Calu3 (cell line): ENCODE measurements at regions of chr13 and their contacts with region 1.

Region 1: DNA sequence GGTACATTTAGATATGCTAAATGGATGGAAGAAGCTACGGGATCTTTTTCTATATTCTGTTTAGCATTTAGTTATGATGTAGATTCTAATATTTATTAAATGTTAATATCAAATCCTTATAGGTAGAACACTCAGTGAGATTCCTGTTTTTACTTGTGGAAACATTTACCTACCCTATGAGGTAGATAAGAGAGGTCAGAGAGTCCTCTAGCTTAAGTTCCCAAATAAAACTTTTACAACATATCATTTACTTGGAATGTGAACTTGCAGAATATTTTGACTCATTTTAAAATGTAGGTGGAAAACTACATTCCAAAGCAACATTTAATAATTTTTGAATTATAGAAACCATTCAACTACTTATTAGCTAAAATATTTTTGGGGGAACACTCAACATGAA is 63.7 kb downstream of the UBL3 start:
- DNase-seq: no peak
- H3K4me3 Mint-ChIP-seq: no peak overlapping the region
- H3K27ac Mint-ChIP-seq: no peak overlapping the region
- H3K4me1 Mint-ChIP-seq: peaks cover 26% of the 10 kb centered on the region
- H3K27me3 Mint-ChIP-seq: no peaks in the 10 kb centered on the region
- CTCF ChIP-seq: no peak

Region 2: DNA sequence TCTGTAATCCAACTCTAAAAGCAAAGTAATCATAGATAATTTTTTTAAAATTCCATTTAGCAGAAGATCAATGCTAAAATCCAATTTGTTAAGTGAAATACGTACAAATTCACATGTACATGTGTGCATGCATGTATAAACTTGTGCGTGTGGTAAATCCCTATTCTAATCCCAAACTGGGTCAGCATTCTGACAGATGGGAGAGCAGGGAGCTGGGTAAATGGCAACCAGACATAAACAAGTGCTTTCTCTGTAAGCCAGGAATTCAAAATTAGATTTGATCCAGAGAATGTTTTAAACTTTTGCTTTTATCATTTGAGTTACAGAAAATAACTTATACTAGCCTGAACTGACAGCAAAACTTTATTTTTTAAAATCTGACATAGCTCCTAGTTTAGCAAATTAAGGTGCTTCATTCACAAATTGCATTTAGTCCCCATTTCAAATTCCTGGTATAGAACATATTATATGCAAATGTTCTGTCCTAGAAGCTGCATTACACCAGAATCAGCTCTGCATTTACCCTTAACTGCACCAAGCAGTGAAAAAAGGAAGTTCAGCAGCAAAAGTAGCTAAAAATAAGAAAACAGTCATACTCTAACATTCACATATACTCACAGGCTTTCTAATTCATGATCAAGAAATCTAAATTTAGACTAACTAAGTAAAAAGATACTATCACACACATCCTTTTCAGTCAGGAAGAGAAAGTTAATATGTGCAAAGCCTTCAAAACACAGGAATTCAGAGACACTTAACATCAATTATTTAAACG is 31.1 kb after region 1 on chr13:
- CTCF ChIA-PET with region 1: no interaction called
- intact Hi-C with region 1: loop called (anchors 5 kb)
- DNase-seq: no peak
- H3K4me3 Mint-ChIP-seq: no peak overlapping the region
- H3K27ac Mint-ChIP-seq: no peak overlapping the region
- H3K4me1 Mint-ChIP-seq: no peaks in the 10 kb centered on the region
- H3K27me3 Mint-ChIP-seq: no peaks in the 10 kb centered on the region
- CTCF ChIP-seq: no peak

Region 3: DNA sequence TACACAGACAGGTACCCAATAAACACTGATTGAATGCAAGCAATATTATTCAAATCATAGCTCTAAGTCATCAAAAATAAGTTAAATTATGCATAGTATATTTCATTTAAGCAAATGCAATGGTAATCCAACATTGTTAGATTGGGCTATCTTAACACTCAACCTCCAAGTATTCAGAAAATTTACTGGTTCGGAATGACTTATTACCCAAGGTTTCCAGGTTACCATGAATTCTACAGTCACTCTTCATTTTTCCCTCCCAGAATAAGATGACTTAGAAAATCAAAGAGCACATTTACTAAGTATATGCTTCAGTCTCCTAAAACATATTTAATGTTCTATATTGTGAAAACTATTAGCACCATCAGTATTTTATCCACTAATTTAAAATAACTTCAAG is 57.7 kb after region 1 on chr13:
- CTCF ChIA-PET with region 1: interaction called, 3 read pairs
- intact Hi-C with region 1: loop called (anchors 5 kb)
- DNase-seq: no peak
- H3K4me3 Mint-ChIP-seq: peak overlapping the region; percentile 48
- H3K27ac Mint-ChIP-seq: peak overlapping the region; percentile 56
- H3K4me1 Mint-ChIP-seq: peaks cover 23% of the 10 kb centered on the region
- H3K27me3 Mint-ChIP-seq: no peaks in the 10 kb centered on the region
- CTCF ChIP-seq: no peak